ENCODE measurements at regions of chr17 and their contacts with region 1.

Region 1: GRCh38 chr17:59753522-59754467 is 46.3 kb downstream of the VMP1 start:
- DNase-seq: peak; percentile 86
- H3K4me3 Mint-ChIP-seq: peak overlapping the region; percentile 56
- H3K27ac Mint-ChIP-seq: peak overlapping the region; percentile 83
- H3K4me1 Mint-ChIP-seq: peaks cover 23% of the 10 kb centered on the region
- H3K27me3 Mint-ChIP-seq: no peaks in the 10 kb centered on the region
- CTCF ChIP-seq: peak; percentile 62

Region 2: GRCh38 chr17:59668816-59669215 is 85.0 kb before region 1 on chr17:
- CTCF ChIA-PET with region 1: no interaction called
- POLR2A ChIA-PET with region 1: no interaction called
- intact Hi-C with region 1: no loop called
- DNase-seq: peak; percentile 39
- H3K4me3 Mint-ChIP-seq: peak overlapping the region; percentile 9
- H3K27ac Mint-ChIP-seq: peak overlapping the region; percentile 37
- H3K4me1 Mint-ChIP-seq: no peaks in the 10 kb centered on the region
- H3K27me3 Mint-ChIP-seq: no peaks in the 10 kb centered on the region
- CTCF ChIP-seq: no peak

Region 3: DNA sequence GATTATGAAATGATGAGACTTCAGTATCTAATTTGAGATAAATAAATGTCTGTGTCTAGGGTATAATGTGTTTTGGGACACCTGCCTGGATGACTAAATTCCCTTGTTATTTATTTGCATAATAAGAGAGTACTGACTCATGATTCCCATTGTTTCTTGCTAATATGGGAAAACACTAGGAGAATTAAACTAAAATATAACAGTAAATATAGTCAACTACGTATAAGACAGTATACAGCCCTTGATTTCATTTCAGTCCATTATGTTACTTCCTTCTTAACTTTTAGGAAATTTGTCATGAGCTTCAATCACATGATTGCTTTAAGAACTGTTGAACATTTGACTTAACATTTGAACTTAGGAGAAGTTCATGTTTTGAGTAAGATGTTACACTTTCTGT is 16.1 kb after region 1 on chr17:
- CTCF ChIA-PET with region 1: interaction called, 7 read pairs
- POLR2A ChIA-PET with region 1: interaction called, 16 read pairs
- intact Hi-C with region 1: no loop called
- DNase-seq: peak; percentile 61
- H3K4me3 Mint-ChIP-seq: no peak overlapping the region
- H3K27ac Mint-ChIP-seq: peak overlapping the region; percentile 75
- H3K4me1 Mint-ChIP-seq: no peaks in the 10 kb centered on the region
- H3K27me3 Mint-ChIP-seq: no peaks in the 10 kb centered on the region
- CTCF ChIP-seq: no peak

Region 4: GRCh38 chr17:59846394-59847165 is 92.8 kb after region 1 on chr17:
- CTCF ChIA-PET with region 1: interaction called, 81 read pairs
- POLR2A ChIA-PET with region 1: interaction called, 135 read pairs
- intact Hi-C with region 1: loop called (anchors 1 kb)
- DNase-seq: peak; percentile 91
- H3K4me3 Mint-ChIP-seq: peak overlapping the region; percentile 50
- H3K27ac Mint-ChIP-seq: peak overlapping the region; percentile 98
- H3K4me1 Mint-ChIP-seq: peaks cover 26% of the 10 kb centered on the region
- H3K27me3 Mint-ChIP-seq: no peaks in the 10 kb centered on the region
- CTCF ChIP-seq: no peak

Region 5: GRCh38 chr17:59892924-59893676 is 139.3 kb after region 1 on chr17 and contains the starts of genes RPS6KB1 and TUBD1:
- CTCF ChIA-PET with region 1: interaction called, 4 read pairs
- POLR2A ChIA-PET with region 1: interaction called, 33 read pairs
- intact Hi-C with region 1: no loop called
- DNase-seq: peak; percentile 98
- H3K4me3 Mint-ChIP-seq: peak within 1 kb of the TSS; percentile 94
- H3K27ac Mint-ChIP-seq: peak within 1 kb of the TSS; percentile 99
- H3K4me1 Mint-ChIP-seq: peaks cover 9% of the 10 kb centered on the region
- H3K27me3 Mint-ChIP-seq: no peaks in the 10 kb centered on the region
- CTCF ChIP-seq: no peak
- total RNA-seq, gene RPS6KB1: 37.4 and 48.4 TPM in 2 replicates
- total RNA-seq, gene TUBD1: 4.4 and 5.2 TPM in 2 replicates

Region 6: GRCh38 chr17:59950049-59950448 is 196.3 kb after region 1 on chr17:
- CTCF ChIA-PET with region 1: no interaction called
- POLR2A ChIA-PET with region 1: no interaction called
- intact Hi-C with region 1: no loop called
- DNase-seq: no peak
- H3K4me3 Mint-ChIP-seq: no peak overlapping the region
- H3K27ac Mint-ChIP-seq: no peak overlapping the region
- H3K4me1 Mint-ChIP-seq: no peaks in the 10 kb centered on the region
- H3K27me3 Mint-ChIP-seq: no peaks in the 10 kb centered on the region
- CTCF ChIP-seq: no peak

Measured in MCF 10A (cell line).